ENCODE measurements at regions of chr15 and their contacts with region 1.

Region 1: GRCh38 chr15:70722266-70723121 is 40.9 kb downstream of the UACA start:
- DNase-seq: no peak
- ATAC-seq: peak; percentile 59
- H3K4me3 ChIP-seq: no peak overlapping the region
- H3K27ac ChIP-seq: peak overlapping the region; percentile 60
- H3K4me1 ChIP-seq: peaks cover 58% of the 10 kb centered on the region
- H3K27me3 ChIP-seq: no peaks in the 10 kb centered on the region
- CTCF ChIP-seq: peak; percentile 78

Region 2: DNA sequence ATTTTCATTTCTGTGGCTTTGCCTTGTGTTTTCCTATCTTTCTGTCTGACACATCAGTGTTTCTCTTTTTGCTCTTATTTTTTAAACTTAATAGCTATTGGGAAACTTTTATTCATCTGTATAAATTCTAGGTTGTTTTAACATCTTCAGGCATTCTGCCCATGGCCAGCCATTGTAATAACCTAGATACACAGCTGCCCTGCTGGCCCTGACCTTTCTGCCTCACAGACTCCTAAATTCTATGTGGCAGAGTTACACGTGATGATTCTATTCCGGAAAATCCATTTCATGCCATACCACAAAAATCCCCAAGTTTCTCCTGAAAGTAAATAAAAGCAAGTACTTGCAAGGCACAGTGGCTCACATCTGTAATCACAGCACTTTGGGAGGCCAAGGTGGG is 109.2 kb before region 1 on chr15:
- CTCF ChIA-PET with region 1: no interaction called
- POLR2A ChIA-PET with region 1: no interaction called
- in situ Hi-C with region 1: no loop called
- intact Hi-C with region 1: no loop called
- DNase-seq: no peak
- ATAC-seq: no peak
- H3K4me3 ChIP-seq: no peak overlapping the region
- H3K27ac ChIP-seq: no peak overlapping the region
- H3K4me1 ChIP-seq: no peaks in the 10 kb centered on the region
- H3K27me3 ChIP-seq: no peaks in the 10 kb centered on the region
- CTCF ChIP-seq: no peak

Region 3: DNA sequence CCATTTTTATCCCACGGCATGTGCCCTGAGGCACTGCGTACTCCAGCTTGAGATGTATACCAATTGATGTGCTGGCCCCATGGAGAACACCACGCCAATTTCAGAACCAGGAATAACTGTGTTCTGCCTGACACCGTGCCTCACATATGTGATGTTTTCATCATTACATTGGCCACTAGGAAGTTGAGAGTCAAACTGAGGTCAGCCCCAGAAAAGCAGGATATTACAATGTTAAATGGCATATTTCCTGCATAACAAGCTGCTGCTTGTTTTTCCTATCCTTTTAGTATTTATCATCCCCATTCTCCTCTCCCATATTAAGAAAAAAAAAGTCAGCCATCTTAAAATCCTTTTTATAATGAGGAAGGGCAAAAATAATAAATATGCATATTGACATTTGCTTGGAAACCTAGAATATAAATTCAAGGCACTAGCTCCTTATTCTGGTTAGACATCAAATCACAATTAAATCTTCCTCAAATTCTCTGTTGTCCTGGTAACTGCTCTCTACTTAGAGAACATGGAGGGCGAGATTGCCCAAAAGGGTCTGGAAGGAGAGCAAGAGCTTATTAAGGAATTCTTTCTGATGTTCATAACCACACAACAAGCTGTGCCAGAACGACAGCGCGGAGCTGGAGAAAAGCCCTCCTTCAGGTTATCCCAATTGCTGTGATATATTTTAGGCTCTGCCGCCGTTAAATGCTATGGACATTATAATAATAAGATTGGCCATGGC is 71.8 kb before region 1 on chr15:
- CTCF ChIA-PET with region 1: no interaction called
- POLR2A ChIA-PET with region 1: no interaction called
- in situ Hi-C with region 1: no loop called
- intact Hi-C with region 1: no loop called
- DNase-seq: no peak
- ATAC-seq: no peak
- H3K4me3 ChIP-seq: no peak overlapping the region
- H3K27ac ChIP-seq: no peak overlapping the region
- H3K4me1 ChIP-seq: no peaks in the 10 kb centered on the region
- H3K27me3 ChIP-seq: no peaks in the 10 kb centered on the region
- CTCF ChIP-seq: no peak

Region 4: DNA sequence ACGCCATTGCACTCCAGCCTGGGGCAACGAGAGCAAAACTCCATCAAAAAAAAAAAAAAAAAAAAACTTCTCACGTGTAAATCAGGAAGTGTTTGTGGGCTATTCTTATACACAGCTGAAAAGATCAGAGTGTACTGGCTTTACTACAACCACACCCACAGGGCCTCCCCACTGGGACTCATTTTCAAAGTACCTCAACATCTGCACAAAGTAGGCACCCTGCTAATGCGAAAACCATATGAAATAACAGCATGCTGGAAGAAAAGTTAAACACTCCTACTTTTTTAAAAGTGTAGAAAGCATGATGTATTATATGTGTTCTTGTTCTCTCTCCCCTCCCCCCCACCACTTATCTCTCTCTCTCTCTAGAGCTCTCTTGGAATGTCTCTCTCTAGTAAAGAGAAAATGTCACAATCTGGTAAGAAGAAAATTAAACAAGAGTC is 29.7 kb after region 1 on chr15:
- CTCF ChIA-PET with region 1: no interaction called
- POLR2A ChIA-PET with region 1: no interaction called
- in situ Hi-C with region 1: no loop called
- intact Hi-C with region 1: no loop called
- DNase-seq: no peak
- ATAC-seq: no peak
- H3K4me3 ChIP-seq: no peak overlapping the region
- H3K27ac ChIP-seq: peak overlapping the region; percentile 74
- H3K4me1 ChIP-seq: peaks cover 85% of the 10 kb centered on the region
- H3K27me3 ChIP-seq: no peaks in the 10 kb centered on the region
- CTCF ChIP-seq: no peak

Region 5: GRCh38 chr15:70812827-70813364 is 90.4 kb after region 1 on chr15:
- CTCF ChIA-PET with region 1: interaction called, 21 read pairs
- POLR2A ChIA-PET with region 1: interaction called, 4 read pairs
- in situ Hi-C with region 1: no loop called
- intact Hi-C with region 1: no loop called
- DNase-seq: no peak
- ATAC-seq: peak; percentile 50
- H3K4me3 ChIP-seq: peak overlapping the region in 1 of 2 experiments; percentile 66; a peak in 2 of 4 replicates
- H3K27ac ChIP-seq: peak overlapping the region; percentile 74
- H3K4me1 ChIP-seq: peaks cover 27% of the 10 kb centered on the region
- H3K27me3 ChIP-seq: no peaks in the 10 kb centered on the region
- CTCF ChIP-seq: no peak

Region 6: DNA sequence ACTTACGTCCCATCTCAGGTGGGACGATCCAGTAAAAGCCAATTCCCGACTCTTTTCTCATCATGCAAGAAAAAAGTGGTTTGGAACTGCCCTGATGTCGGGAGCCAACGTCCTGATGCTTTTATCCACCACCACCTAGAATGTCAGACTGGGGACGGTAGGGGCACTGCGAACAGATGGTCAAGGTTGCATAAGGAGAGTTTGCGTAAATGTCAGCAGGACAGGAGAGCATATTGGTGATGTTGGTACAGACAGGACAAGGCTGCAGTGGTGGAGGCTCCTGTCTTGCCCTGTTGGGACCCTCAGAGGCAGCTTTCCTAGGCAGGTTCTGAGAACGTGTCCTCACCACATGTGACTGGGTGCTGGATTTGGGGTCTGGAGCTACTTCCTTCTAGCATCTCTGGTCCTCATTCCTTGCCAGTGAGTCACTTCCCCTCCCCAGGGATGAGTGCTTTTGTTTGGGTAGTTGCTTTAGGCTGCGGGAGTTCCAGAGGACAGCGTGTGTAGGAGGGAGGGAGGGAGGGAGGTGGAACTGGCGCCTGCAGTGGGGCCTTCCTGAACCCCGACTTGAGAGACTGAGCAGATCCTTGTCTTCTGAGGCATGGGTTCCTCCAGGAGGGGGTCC is 413.8 kb after region 1 on chr15:
- CTCF ChIA-PET with region 1: no interaction called
- POLR2A ChIA-PET with region 1: interaction called, 10 read pairs
- in situ Hi-C with region 1: no loop called
- intact Hi-C with region 1: no loop called
- DNase-seq: no peak
- ATAC-seq: peak; percentile 92
- H3K4me3 ChIP-seq: no peak overlapping the region
- H3K27ac ChIP-seq: peak overlapping the region; percentile 76
- H3K4me1 ChIP-seq: peaks cover 42% of the 10 kb centered on the region
- H3K27me3 ChIP-seq: no peaks in the 10 kb centered on the region
- CTCF ChIP-seq: no peak

Measured in Panc1 (cell line).